CD4-positive, alpha-beta memory T cell (primary cell): ENCODE measurements at regions of chr14 and their contacts with region 1.

Region 1: GRCh38 chr14:57317316-57317715 is 48.5 kb downstream of the AP5M1 start:
- DNase-seq: peak; percentile 65 to 73 (median 69)
- H3K4me3 ChIP-seq: no peak overlapping the region
- H3K4me3 Mint-ChIP-seq: no peak overlapping the region
- H3K27ac ChIP-seq: no peak overlapping the region
- H3K27ac Mint-ChIP-seq: no peak overlapping the region
- H3K4me1 ChIP-seq: no peaks in the 10 kb centered on the region
- H3K4me1 Mint-ChIP-seq: peaks cover 0 to 6% (median 4%) of the 10 kb centered on the region in 4 donors
- H3K27me3 ChIP-seq: no peaks in the 10 kb centered on the region
- H3K27me3 Mint-ChIP-seq: peaks cover 2 to 8% of the 10 kb centered on the region in 2 donors

Region 2: DNA sequence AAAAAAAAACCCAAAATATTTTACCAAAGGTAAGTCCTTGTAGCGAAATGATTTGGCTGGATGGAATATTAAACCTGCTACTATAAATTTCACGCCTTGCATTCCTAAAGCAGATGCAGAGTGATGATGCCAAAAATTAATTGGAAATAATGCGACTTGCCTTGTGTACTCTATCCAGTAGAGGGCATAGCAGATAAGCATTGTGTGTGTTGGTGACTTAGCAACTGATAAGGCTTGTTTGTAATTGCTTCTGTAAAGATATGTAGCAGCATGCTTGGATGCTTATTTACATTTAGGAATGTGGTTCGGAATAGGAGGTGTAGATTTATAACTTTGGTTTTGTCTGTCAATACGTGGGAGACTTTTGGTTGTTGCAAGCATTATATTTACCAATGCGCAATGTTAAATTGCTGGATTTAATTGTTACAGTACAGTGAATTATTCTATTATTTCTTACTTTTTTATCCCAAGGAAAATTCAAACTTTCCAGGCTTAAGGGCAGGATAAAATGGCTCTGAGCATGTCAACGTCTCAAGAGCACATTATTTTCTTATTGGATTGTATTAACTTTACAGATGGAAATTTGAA is 657.3 kb before region 1 on chr14:
- CTCF ChIA-PET with region 1: no interaction called
- POLR2A ChIA-PET with region 1: no interaction called
- intact Hi-C with region 1: loop called (anchors 1 kb)
- DNase-seq: peak in 1 of 5 donors; percentile 3
- H3K4me3 ChIP-seq: no peak overlapping the region
- H3K4me3 Mint-ChIP-seq: no peak overlapping the region
- H3K27ac ChIP-seq: no peak overlapping the region
- H3K27ac Mint-ChIP-seq: no peak overlapping the region
- H3K4me1 ChIP-seq: no peaks in the 10 kb centered on the region
- H3K4me1 Mint-ChIP-seq: no peaks in the 10 kb centered on the region
- H3K27me3 ChIP-seq: no peaks in the 10 kb centered on the region
- H3K27me3 Mint-ChIP-seq: peaks cover 0 to 3% of the 10 kb centered on the region in 2 donors